ENCODE measurements at regions of chr10 and their contacts with region 1.

Region 1: DNA sequence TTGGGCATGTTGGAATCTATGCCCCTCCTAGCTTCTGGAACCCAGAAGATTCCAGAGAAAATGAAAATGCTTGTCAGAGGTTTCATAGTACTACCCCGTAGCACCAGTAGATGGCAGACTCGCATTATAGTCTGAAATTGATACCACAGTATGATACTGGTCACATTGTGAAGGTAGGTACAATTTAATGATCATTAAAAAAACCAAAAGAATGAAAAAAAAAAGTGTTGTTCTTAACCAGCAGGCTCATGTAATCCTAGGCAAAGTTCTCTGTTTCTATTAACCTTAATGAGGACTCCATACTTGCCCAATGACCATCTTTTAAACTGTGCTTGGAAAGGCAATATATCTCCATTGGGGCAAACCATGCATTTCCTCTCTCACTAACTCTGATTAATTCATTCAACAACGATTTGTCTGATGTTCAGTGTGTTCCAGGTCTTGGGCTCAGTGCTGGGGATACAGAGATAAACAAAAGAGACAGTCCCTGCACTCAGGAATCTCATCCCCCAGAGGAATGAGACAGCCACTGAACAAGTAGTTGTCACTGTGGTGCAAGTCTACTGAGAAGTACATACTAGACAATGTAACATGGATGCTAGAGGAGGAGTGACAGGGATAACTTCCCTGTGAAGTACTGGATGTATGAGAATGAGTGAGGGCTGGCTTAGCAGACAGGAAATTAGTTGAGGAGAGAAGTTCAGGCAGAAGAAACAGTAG is 223.5 kb upstream of the PHYHIPL start:
- DNase-seq: peak; percentile 67 to 84
- H3K4me3 ChIP-seq: no peak overlapping the region
- H3K4me3 Mint-ChIP-seq: no peak overlapping the region
- H3K27ac Mint-ChIP-seq: peak overlapping the region; percentile 24
- H3K4me1 ChIP-seq: peaks cover 22% of the 10 kb centered on the region
- H3K4me1 Mint-ChIP-seq: peaks cover 23% of the 10 kb centered on the region
- H3K27me3 ChIP-seq: no peaks in the 10 kb centered on the region
- H3K27me3 Mint-ChIP-seq: no peaks in the 10 kb centered on the region
- CTCF ChIP-seq: peak; percentile 92 to 97

Region 2: DNA sequence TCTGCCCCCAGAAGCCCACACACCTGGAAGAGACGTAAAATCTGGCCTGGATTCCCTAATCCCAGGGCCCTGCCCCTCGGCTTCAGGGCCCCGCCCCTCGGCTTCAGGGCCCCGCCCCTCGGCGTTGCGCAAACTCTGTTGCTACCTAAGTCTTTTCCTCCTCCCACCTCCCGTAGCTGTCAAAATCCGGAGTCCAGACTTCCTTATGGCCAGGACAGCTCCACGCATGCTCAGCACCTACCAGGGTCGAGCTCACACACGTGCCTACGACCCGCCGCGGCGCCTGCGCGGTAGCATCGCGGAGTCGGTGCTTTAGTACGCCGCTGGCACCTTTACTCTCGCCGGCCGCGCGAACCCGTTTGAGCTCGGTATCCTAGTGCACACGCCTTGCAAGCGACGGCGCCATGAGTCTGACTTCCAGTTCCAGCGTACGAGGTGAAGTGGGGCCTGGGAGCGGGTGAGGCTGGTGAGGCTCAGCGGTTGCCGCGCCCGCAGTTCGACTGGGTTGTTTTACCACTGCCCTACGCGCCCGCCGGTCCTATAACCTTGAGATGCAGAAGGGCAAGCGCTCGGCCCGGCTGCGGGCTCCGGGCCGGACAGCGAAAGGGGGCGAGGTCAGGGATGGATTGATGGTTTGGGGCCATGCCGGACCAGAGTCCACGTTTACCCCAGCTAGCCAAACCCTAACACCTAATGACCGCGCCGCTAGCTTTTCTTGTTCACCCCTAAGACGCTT is 683.9 kb before region 1 on chr10 and contains the start of gene CISD1:
- CTCF ChIA-PET with region 1: no interaction called
- POLR2A ChIA-PET with region 1: no interaction called
- intact Hi-C with region 1: no loop called
- DNase-seq: peak; percentile 100
- H3K4me3 ChIP-seq: peak within 1 kb of the TSS; percentile 100
- H3K4me3 Mint-ChIP-seq: peak within 1 kb of the TSS; percentile 96
- H3K27ac Mint-ChIP-seq: peak within 1 kb of the TSS; percentile 98
- H3K4me1 ChIP-seq: peaks cover 18% of the 10 kb centered on the region
- H3K4me1 Mint-ChIP-seq: peaks cover 7% of the 10 kb centered on the region
- H3K27me3 ChIP-seq: no peaks in the 10 kb centered on the region
- H3K27me3 Mint-ChIP-seq: no peaks in the 10 kb centered on the region
- CTCF ChIP-seq: no peak
- total RNA-seq, gene CISD1: 98.3 and 99.3 TPM in 2 replicates

Region 3: DNA sequence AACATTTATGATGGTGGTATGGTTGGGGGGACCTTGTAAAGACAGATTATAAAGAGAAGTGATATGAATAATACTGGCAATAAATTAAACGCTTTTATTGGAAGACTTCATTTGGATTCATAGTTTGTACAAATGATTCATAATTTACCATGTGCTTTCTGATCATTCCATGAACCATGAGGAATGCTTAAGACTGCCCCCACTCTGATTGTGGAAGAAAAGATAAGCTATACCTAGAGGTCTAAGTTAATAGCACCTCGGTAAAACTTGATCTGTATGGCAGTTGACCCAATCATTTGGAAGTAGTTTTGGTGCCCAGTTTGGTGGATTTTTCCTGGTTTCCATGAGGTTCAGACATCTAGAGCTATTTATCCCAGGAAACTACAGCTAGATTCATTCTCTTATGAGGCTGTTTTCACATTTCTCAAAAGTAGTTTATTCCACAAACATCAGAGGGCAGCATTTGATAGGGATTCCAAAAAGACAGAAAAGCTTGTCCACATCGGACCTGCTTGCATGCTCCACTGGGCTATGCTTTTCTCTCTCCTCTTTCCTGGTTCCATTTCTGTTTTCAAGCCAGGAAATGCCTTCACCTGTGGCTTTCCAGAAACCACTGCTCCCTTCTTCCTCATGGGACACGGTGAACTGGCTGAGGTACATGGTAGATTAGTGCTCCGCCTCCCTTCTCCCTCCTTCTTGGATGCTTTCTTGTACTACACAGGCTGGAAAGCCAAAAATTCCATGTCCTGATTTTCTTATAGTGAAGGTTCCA is 538.5 kb before region 1 on chr10:
- CTCF ChIA-PET with region 1: interaction called, 10 read pairs
- POLR2A ChIA-PET with region 1: no interaction called
- intact Hi-C with region 1: loop called (anchors 2 kb)
- DNase-seq: peak; percentile 59 to 85
- H3K4me3 ChIP-seq: no peak overlapping the region
- H3K4me3 Mint-ChIP-seq: no peak overlapping the region
- H3K27ac Mint-ChIP-seq: peak overlapping the region; percentile 38
- H3K4me1 ChIP-seq: peaks cover 35% of the 10 kb centered on the region
- H3K4me1 Mint-ChIP-seq: peaks cover 37% of the 10 kb centered on the region
- H3K27me3 ChIP-seq: no peaks in the 10 kb centered on the region
- H3K27me3 Mint-ChIP-seq: no peaks in the 10 kb centered on the region
- CTCF ChIP-seq: peak; percentile 57 to 84

Region 4: GRCh38 chr10:58813573-58813972 is 139.3 kb before region 1 on chr10:
- CTCF ChIA-PET with region 1: interaction called, 5 read pairs
- POLR2A ChIA-PET with region 1: no interaction called
- intact Hi-C with region 1: loop called (anchors 1 kb)
- DNase-seq: peak; percentile 81 to 84
- H3K4me3 ChIP-seq: no peak overlapping the region
- H3K4me3 Mint-ChIP-seq: peak overlapping the region; percentile 67
- H3K27ac Mint-ChIP-seq: peak overlapping the region; percentile 85
- H3K4me1 ChIP-seq: peaks cover 69% of the 10 kb centered on the region
- H3K4me1 Mint-ChIP-seq: peaks cover 80% of the 10 kb centered on the region
- H3K27me3 ChIP-seq: no peaks in the 10 kb centered on the region
- H3K27me3 Mint-ChIP-seq: no peaks in the 10 kb centered on the region
- CTCF ChIP-seq: no peak

Region 5: GRCh38 chr10:58980826-58981415 is 28.0 kb after region 1 on chr10:
- CTCF ChIA-PET with region 1: no interaction called
- POLR2A ChIA-PET with region 1: no interaction called
- intact Hi-C with region 1: no loop called
- DNase-seq: no peak
- H3K4me3 ChIP-seq: no peak overlapping the region
- H3K4me3 Mint-ChIP-seq: no peak overlapping the region
- H3K27ac Mint-ChIP-seq: no peak overlapping the region
- H3K4me1 ChIP-seq: no peaks in the 10 kb centered on the region
- H3K4me1 Mint-ChIP-seq: no peaks in the 10 kb centered on the region
- H3K27me3 ChIP-seq: no peaks in the 10 kb centered on the region
- H3K27me3 Mint-ChIP-seq: no peaks in the 10 kb centered on the region
- CTCF ChIP-seq: no peak

Region 6: DNA sequence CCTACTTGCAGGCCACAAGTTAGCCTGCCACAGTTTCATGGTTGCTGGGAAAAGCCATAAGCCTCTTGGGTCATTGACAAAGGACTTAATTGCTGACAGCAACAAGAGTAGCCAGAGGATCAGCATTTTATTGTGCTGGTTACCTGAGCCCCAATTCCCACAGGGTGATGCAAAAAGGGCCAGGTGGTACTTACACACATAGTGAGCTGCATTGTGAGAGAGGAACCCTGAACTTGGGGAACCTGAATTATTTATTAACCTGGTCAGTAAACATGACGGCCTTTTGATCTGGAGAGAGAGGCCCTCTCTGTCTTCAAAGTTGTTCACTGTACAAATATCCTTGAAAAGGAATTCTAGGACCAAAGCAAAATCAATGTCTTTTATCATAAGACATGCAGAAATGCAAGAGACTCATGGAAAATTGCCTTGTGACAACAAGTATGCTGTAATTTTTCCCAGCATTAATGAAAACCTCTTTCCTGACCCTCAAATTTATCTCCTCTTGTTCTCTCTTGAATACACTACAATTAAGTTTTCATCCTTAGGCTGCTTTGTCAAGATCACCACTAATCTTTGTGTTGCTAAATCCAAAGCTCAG is 120.6 kb after region 1 on chr10:
- CTCF ChIA-PET with region 1: no interaction called
- POLR2A ChIA-PET with region 1: no interaction called
- intact Hi-C with region 1: loop called (anchors 5 kb)
- DNase-seq: peak; percentile 91 to 94
- H3K4me3 ChIP-seq: no peak overlapping the region
- H3K4me3 Mint-ChIP-seq: no peak overlapping the region
- H3K27ac Mint-ChIP-seq: no peak overlapping the region
- H3K4me1 ChIP-seq: peaks cover 55% of the 10 kb centered on the region
- H3K4me1 Mint-ChIP-seq: peaks cover 13% of the 10 kb centered on the region
- H3K27me3 ChIP-seq: no peaks in the 10 kb centered on the region
- H3K27me3 Mint-ChIP-seq: no peaks in the 10 kb centered on the region
- CTCF ChIP-seq: no peak

Region 7: GRCh38 chr10:59227136-59227673 is 274.3 kb after region 1 on chr10:
- CTCF ChIA-PET with region 1: interaction called, 7 read pairs
- POLR2A ChIA-PET with region 1: no interaction called
- intact Hi-C with region 1: loop called (anchors 2 kb)
- DNase-seq: peak in 1 of 2 experiments; percentile 34
- H3K4me3 ChIP-seq: no peak overlapping the region
- H3K4me3 Mint-ChIP-seq: no peak overlapping the region
- H3K27ac Mint-ChIP-seq: no peak overlapping the region
- H3K4me1 ChIP-seq: peaks cover 16% of the 10 kb centered on the region
- H3K4me1 Mint-ChIP-seq: peaks cover 23% of the 10 kb centered on the region
- H3K27me3 ChIP-seq: no peaks in the 10 kb centered on the region
- H3K27me3 Mint-ChIP-seq: no peaks in the 10 kb centered on the region
- CTCF ChIP-seq: peak in 1 of 2 experiments; percentile 37

Region 8: GRCh38 chr10:59580026-59580863 is 627.3 kb after region 1 on chr10:
- CTCF ChIA-PET with region 1: interaction called, 3 read pairs
- POLR2A ChIA-PET with region 1: no interaction called
- intact Hi-C with region 1: loop called (anchors 1 kb)
- DNase-seq: peak in 1 of 2 experiments; percentile 55
- H3K4me3 ChIP-seq: no peak overlapping the region
- H3K4me3 Mint-ChIP-seq: no peak overlapping the region
- H3K27ac Mint-ChIP-seq: no peak overlapping the region
- H3K4me1 ChIP-seq: no peaks in the 10 kb centered on the region
- H3K4me1 Mint-ChIP-seq: peaks cover 7% of the 10 kb centered on the region
- H3K27me3 ChIP-seq: no peaks in the 10 kb centered on the region
- H3K27me3 Mint-ChIP-seq: peaks cover 3% of the 10 kb centered on the region
- CTCF ChIP-seq: peak; percentile 79 to 82